ENCODE measurements at regions of chr12 and their contacts with region 1.

Region 1: DNA sequence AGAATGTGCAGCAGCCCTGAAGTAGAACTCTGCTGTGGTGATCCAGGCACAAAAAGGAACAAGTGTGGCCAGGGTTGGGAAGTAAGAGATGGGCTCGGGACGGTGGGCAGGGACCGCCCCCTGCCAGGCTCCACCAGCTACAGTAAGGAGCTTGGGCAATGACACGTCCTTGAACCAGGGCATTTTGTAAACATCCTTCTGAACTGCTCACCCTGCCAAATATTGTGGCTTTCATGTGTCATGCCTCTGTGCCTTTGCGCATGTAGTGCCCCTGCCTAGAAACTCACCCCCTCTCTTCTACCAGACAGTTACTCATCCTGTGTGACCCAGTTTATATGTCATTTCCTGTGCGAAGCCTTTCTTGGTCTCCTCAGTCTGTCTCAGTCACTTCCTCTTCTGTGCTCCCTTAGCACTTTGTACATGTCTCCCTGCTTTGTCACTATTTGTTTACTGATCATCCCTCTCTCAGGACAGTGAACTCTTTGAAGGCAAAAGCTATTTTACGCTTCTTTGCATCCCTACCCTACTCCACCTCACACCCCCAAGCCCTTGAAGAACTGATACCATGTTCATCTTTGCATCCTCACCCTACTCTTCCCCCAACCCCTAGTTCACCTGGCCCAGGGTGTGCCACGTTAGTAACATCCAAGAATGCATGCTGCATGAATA is 108.9 kb upstream of the PLEKHG7 start:
- DNase-seq: peak; percentile 87
- H3K4me3 Mint-ChIP-seq: peak overlapping the region; percentile 55
- H3K27ac Mint-ChIP-seq: peak overlapping the region; percentile 96
- H3K4me1 Mint-ChIP-seq: peaks cover 78% of the 10 kb centered on the region
- H3K27me3 Mint-ChIP-seq: no peaks in the 10 kb centered on the region

Region 2: GRCh38 chr12:92582475-92582874 is 11.4 kb before region 1 on chr12:
- CTCF ChIA-PET with region 1: no interaction called
- intact Hi-C with region 1: loop called (anchors 1 kb)
- DNase-seq: no peak
- H3K4me3 Mint-ChIP-seq: no peak overlapping the region
- H3K27ac Mint-ChIP-seq: no peak overlapping the region
- H3K4me1 Mint-ChIP-seq: peaks cover 2% of the 10 kb centered on the region
- H3K27me3 Mint-ChIP-seq: no peaks in the 10 kb centered on the region

Region 3: DNA sequence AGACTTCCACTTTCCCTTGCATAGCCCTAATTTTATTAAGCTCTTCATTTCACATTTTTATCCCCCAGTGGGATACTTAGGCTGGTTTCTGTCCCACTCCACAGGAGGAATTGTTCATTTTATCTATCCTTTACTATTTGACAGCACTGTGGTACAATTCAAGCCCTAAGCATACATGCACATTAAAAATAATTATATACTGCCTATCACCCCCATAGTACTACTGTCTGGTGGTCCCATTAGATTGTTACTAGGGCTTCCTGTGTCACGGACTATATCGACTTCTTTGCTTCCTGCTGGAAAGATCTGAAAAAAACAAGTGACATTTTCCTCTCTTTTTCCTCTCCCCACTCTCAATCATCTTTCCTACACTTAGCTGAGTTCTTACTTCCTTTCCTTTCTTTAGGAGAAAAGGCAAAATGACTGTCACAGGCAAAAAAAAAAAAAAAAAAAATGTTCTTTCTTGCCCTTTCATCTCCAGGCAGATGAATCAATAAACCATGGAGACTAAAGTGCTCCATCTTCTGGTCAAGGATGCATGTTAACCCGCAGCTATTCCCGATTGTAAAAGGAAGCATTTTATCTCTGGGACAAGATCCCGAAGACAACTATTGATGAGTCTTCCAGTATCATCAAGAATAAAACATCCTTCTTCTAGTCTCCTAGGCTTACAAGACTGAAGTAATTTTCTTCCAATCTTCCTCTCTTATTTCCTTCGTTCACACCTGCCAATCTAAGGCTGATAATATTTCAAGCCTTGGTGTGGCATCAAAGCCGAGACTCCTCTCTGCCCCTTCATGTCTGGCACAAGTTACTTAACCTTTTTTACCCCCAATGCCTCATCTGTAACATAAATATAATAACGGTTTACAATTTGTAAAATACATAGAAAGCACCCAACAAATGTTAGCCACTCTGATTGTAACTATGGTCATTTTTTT is 14.6 kb after region 1 on chr12:
- CTCF ChIA-PET with region 1: interaction called, 31 read pairs
- intact Hi-C with region 1: loop called (anchors 1 kb)
- DNase-seq: no peak
- H3K4me3 Mint-ChIP-seq: no peak overlapping the region
- H3K27ac Mint-ChIP-seq: no peak overlapping the region
- H3K4me1 Mint-ChIP-seq: peaks cover 29% of the 10 kb centered on the region
- H3K27me3 Mint-ChIP-seq: no peaks in the 10 kb centered on the region

Region 4: DNA sequence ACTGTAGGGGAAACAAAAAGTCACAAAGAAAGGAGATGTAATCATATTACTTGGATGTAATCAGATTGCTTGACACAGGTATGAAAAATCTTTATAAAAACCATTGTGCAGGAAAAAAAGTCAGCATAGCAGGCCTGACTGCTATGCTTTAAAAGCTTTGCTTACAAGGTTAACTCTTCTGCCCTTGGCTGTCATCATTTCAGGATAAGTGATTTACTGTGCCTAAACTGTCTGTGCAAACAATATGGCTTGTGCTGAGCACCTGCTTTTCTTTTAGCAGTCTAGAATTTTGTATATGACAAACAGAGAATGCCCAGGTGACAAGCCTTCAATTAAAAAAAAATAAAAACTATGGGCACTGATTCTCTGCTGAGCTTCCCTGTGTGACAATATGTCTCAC is 45.1 kb after region 1 on chr12:
- CTCF ChIA-PET with region 1: no interaction called
- intact Hi-C with region 1: no loop called
- DNase-seq: no peak
- H3K4me3 Mint-ChIP-seq: no peak overlapping the region
- H3K27ac Mint-ChIP-seq: no peak overlapping the region
- H3K4me1 Mint-ChIP-seq: no peaks in the 10 kb centered on the region
- H3K27me3 Mint-ChIP-seq: no peaks in the 10 kb centered on the region

Measured in activated naive CD4-positive, alpha-beta T cell treated with anti-CD3 and anti-CD28 coated beads for 36 hours (primary cell).